PC-3 (cell line): ENCODE measurements at regions of chr5 and their contacts with region 1.

Region 1: DNA sequence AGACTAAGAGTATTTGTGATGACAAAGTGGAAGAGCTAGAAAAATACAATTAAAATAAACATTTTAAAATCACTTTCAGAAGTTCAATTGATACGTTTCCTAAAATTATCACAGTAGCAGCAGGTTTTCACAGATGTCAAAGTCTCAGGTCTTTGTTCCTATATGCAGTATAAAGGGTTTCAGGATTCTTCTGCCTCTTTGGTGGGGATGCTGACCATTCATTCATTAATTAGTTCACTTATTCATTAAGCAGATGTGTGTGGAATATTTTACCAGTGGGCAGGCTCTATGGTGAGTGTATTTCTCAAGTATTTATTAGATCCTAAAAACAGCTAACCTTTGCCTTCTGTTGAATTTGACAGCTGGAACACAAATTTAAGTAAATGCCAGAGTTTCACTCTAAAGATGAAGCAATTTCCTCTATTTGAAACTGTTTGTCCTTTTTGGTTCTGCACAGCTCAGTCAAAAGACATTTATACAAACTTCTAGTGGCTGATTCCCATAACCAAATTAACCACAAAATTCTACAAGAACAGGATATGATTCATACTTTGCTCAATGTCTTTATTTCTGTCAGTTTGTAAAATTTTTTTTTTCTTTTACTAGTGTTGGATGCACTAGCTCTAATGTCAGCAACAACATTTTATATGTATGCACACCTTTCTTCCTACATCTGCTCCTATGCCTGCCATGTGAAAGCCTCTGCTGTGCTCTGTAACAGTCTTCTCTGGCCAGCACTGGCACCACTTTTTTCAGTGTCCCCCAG is 75.9 kb upstream of the PRR16 start:
- DNase-seq: peak; percentile 77
- ATAC-seq: peak; percentile 94
- H3K4me3 ChIP-seq: no peak overlapping the region
- H3K27ac ChIP-seq: peak overlapping the region; percentile 83
- H3K4me1 ChIP-seq: peaks cover 23% of the 10 kb centered on the region
- H3K27me3 ChIP-seq: no peaks in the 10 kb centered on the region
- CTCF ChIP-seq: no peak

Region 2: DNA sequence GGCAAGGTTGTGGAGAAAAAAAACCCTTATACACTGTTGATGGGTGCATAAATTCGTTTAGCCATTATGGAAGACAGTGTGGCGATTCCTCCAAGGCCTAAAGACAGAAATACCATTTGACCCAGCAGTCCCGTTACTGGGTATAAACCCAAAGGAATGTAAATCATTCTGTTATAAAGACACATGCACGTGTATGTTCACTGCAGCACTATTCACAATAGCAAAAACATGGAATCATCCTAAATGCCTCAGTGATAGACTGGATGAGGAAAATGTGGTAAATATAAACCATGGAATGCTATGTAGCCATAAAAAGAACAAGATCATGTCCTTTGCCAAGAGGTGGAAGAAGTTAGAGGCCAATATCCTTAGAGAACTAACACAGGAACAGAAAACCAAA is 44.0 kb before region 1 on chr5:
- CTCF ChIA-PET with region 1: no interaction called
- POLR2A ChIA-PET with region 1: no interaction called
- intact Hi-C with region 1: no loop called
- DNase-seq: no peak
- ATAC-seq: no peak
- H3K4me3 ChIP-seq: no peak overlapping the region
- H3K27ac ChIP-seq: no peak overlapping the region
- H3K4me1 ChIP-seq: no peaks in the 10 kb centered on the region
- H3K27me3 ChIP-seq: no peaks in the 10 kb centered on the region
- CTCF ChIP-seq: no peak

Region 3: DNA sequence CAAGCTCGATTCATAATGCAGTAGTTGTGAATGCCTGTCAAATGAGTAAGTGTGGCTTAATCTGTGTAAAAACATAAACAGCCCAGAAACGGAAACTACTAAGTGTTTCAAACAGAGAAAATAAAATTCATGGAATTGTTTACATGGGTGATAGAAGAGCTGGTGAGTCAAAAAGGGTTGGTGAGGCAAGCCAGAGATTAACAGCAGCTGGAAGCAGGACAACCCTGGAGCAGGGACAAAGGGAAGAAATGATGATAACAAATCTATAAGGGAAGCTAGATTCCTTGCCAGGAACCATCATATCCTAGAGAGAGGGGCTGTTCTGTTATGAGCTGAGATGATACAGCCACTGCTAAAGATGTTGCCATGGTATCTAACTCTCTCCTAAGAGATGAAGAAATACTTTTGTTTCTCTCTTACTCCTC is 57.9 kb after region 1 on chr5:
- CTCF ChIA-PET with region 1: no interaction called
- POLR2A ChIA-PET with region 1: no interaction called
- intact Hi-C with region 1: loop called (anchors 2 kb)
- DNase-seq: peak; percentile 76
- ATAC-seq: peak; percentile 89
- H3K4me3 ChIP-seq: no peak overlapping the region
- H3K27ac ChIP-seq: no peak overlapping the region
- H3K4me1 ChIP-seq: peaks cover 15% of the 10 kb centered on the region
- H3K27me3 ChIP-seq: no peaks in the 10 kb centered on the region
- CTCF ChIP-seq: no peak

Region 4: DNA sequence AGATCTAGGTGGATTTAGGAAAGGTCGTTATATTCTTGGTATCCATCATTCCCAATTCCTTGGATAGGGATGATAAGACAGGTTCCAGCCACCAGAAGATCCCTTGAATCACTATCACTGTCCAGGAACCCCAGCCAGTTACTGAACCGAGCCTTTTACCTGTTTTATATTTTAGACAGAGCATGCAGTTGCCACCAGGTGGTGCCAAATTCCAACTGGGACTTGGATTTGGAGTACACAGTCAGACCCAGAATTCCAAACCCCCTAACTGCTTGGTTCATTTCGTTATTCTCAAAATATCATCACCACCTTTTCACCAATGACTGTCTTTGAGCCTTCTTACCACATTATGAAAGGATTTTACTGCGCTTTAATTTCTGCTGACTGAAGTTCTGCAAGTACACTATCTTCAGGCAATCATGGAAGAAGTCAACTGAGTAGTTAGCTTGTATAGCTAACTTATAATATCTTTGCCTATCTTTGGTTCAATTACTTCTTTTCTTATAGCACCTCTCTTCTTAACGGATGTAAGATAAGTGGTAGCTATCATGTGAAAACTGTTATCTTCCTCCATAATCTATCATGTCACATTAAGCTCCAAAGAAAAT is 267.7 kb after region 1 on chr5:
- CTCF ChIA-PET with region 1: no interaction called
- POLR2A ChIA-PET with region 1: no interaction called
- intact Hi-C with region 1: no loop called
- DNase-seq: peak; percentile 64
- ATAC-seq: peak; percentile 66
- H3K4me3 ChIP-seq: no peak overlapping the region
- H3K27ac ChIP-seq: no peak overlapping the region
- H3K4me1 ChIP-seq: no peaks in the 10 kb centered on the region
- H3K27me3 ChIP-seq: no peaks in the 10 kb centered on the region
- CTCF ChIP-seq: peak; percentile 78